ENCODE measurements at regions of chr12 and their contacts with region 1.

Region 1: GRCh38 chr12:52980693-52981423 is 25.4 kb upstream of the EIF4B start:
- DNase-seq: peak; percentile 89
- H3K27ac ChIP-seq: 0 out of 2 replicates have a peak overlapping the region, but pooled peaks have one; percentile 32
- CTCF ChIP-seq: peak; percentile 97

Region 2: DNA sequence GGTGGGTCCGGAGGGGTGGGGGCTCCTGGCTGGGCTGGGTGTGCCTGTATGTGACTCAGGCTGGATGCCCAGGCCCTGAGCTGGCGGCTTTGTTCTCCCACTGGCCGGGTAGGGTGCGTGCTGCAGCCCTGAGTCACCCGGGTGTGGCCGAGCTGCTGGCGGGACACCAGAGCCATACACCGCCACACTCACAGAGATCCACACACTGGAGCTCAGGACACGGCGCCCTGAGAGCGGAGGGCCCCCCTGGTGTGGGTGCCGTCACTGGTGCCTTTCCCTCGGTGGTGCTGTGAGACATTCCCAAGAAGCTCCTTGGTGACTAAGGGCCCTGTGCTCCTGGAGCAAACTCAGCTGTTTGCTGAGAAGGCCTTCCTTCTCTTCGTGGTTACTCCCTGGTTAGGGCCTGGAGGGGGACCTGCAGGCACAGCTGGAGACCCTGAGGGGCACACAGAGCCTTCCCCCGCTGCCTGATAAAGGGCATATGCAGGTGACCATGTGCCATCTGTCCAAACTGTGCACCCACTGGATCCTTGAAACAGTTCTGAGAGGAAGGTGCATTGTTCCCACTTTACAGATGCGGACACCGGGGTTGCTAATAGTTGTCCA is 833.4 kb before region 1 on chr12:
- CTCF ChIA-PET with region 1: interaction called, 18 read pairs
- POLR2A ChIA-PET with region 1: no interaction called
- DNase-seq: peak; percentile 93
- H3K27ac ChIP-seq: peak overlapping the region; percentile 100
- CTCF ChIP-seq: no peak

Region 3: DNA sequence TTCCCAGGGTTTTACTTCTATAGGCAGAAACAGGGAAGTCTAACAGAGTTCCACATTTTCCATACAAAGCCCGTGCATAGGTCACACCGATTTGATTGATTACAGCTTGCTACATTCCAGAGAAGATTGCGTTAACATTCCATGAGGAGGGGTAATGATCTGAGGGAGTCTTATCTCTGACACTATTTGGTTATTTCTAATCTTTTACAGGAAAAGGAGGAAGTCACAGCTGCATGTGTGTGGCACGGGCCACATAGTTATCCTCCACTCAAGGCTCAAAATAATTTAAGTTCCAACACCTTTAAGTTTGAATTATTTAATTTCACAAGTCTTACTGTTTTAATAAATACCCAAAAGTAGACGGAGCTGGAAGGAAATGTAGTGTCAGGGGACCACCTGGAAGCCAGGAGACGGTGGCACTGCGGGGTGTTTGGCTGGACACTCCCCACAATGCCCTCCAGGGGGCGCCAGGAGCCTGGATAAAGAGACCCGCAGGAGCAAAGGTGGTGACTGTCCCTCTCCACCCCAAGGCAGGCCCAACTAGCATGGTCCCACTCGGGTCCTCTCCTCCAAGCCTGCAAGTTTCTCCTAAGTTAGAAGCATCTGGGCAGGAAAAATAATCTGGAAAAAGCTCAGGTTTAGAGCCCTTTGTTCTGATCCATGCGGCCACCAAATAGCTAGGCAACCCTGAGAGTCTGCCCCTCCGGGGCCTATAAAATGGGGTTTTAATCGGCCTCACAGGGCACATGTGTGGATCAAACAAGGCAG is 96.1 kb before region 1 on chr12:
- CTCF ChIA-PET with region 1: interaction called, 165 read pairs
- POLR2A ChIA-PET with region 1: interaction called, 6 read pairs
- DNase-seq: peak; percentile 69
- H3K27ac ChIP-seq: no peak overlapping the region
- CTCF ChIP-seq: peak; percentile 84

Region 4: GRCh38 chr12:52895061-52895887 is 85.6 kb before region 1 on chr12:
- CTCF ChIA-PET with region 1: interaction called, 12 read pairs
- POLR2A ChIA-PET with region 1: no interaction called
- DNase-seq: no peak
- H3K27ac ChIP-seq: peak overlapping the region; percentile 73
- CTCF ChIP-seq: no peak

Region 5: GRCh38 chr12:52903285-52903854 is 77.5 kb before region 1 on chr12:
- CTCF ChIA-PET with region 1: interaction called, 29 read pairs
- POLR2A ChIA-PET with region 1: no interaction called
- DNase-seq: no peak
- H3K27ac ChIP-seq: peak overlapping the region; percentile 96
- CTCF ChIP-seq: no peak

Region 6: GRCh38 chr12:52949413-52950331 is 31.2 kb before region 1 on chr12:
- CTCF ChIA-PET with region 1: interaction called, 10 read pairs
- POLR2A ChIA-PET with region 1: no interaction called
- DNase-seq: peak; percentile 95
- H3K27ac ChIP-seq: peak overlapping the region; percentile 92
- CTCF ChIP-seq: no peak

Region 7: DNA sequence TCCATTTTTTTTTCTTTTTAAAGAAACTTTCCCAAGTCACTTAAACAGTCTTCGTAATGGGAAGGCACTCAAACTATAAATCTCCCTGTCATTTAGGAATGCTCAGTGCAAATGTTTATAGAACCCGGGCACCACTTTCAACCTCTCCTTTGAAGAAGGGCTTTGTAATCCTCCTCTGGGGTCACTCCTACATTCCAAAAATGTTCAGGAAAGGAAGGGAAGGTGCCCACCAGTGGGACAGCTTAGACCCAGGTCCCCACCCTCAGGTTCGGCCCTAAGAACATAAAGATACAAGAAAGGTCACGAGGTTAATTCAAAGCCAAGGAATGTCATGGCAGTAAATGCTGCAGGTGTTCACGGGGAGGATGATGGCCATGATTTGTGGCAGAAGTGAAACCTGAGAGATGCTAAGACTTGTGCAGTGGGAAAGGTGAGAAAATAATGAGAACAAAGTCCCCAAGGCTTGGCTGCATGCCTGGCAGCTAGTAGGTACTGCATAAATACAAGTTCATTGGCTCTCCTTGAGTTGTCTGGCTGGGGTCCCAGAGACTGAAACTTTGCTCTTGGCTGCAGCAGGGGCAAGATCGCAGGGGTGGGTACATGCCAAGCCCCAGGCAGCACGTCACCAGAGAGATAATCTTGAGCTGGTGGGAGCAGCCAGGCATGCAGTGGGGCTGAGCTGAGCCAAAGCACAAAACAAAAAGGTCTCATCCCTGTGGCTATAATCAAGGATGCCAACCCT is 10.9 kb before region 1 on chr12:
- CTCF ChIA-PET with region 1: interaction called, 20 read pairs
- POLR2A ChIA-PET with region 1: interaction called, 5 read pairs
- DNase-seq: no peak
- H3K27ac ChIP-seq: peak overlapping the region; percentile 96
- CTCF ChIP-seq: no peak

Region 8: DNA sequence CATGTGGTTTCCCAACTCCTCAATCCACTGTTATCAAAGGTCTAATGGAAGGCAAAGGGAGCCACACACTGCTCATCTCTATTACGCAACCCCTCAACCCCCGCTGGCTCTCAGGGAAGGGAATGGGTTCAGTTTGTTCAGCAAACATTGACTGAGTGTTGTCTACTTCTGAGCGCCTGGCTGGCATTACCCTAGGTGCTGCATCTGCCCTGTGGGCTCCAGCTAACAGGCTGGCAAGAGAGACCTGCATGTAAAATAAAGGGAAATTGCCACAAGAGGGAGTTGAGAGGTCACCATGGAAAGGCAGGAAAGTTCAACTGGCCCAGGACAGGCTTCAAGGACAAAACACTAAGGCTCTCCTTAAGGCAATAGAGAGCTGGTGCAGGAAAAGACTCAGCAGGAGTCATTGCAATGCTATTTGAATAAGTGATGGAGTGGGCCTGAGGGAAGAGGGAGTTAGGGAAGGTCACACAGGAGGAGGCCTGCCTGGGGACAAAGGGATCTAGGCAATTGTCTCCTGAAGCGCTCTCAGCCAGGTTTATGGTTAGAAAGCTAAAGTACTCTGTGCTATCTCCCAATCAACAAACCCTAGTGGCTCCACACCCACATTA is 194.1 kb after region 1 on chr12:
- CTCF ChIA-PET with region 1: no interaction called
- POLR2A ChIA-PET with region 1: no interaction called
- DNase-seq: no peak
- H3K27ac ChIP-seq: peak overlapping the region; percentile 22
- CTCF ChIP-seq: no peak